ENCODE measurements at regions of chr11 and their contacts with region 1.

Region 1: GRCh38 chr11:120511116-120511819 is at the start of gene GRIK4:
- DNase-seq: peak; percentile 75 to 92 (median 89)
- H3K4me3 ChIP-seq: peak within 1 kb of the TSS; percentile 31 to 77 (median 60)
- H3K27ac ChIP-seq: peak within 1 kb of the TSS in 42 of 59 donors; percentile 0 to 84 (median 70)
- H3K27me3 ChIP-seq: peaks cover 0 to 13% (median 0%) of the 10 kb centered on the region in 45 donors
- CTCF ChIP-seq: peak; percentile 77 to 99 (median 96)
- total RNA-seq, gene GRIK4: 7.8 to 24.1 (median 14.8) TPM

Region 2: GRCh38 chr11:120547811-120548681 is 36.8 kb after region 1 on chr11:
- intact Hi-C with region 1: loop called in 1 of 2 experiments (anchors 5 kb)
- DNase-seq: peak; percentile 37 to 97 (median 94)
- H3K4me3 ChIP-seq: peak overlapping the region in 4 of 59 donors; percentile 12 to 30 (median 17)
- H3K27ac ChIP-seq: peak overlapping the region; percentile 21 to 94 (median 80)
- H3K27me3 ChIP-seq: no peaks in the 10 kb centered on the region
- CTCF ChIP-seq: peak in 19 of 56 donors; percentile 2 to 31 (median 14)

Region 3: DNA sequence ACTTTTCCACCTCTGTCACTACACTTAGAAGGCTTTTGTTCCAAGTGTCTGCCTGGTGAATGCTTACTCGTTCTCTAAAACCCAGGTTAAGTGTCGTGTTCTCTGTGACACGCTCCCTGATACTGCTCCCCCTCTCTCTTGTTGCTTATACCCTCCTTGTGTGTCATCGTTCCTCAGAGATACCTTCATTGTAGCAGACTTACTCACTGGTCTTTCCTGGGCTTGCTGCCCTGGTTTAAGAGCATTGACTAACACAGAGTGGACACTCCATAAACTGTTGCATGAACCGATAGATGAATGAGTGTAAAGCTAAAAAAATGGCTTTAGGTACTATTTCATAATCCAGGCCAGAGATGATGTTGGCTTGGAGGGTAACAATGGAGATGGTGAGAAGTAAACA is 171.6 kb after region 1 on chr11:
- intact Hi-C with region 1: loop called (anchors 1 to 2 kb)
- DNase-seq: no peak
- H3K4me3 ChIP-seq: no peak overlapping the region
- H3K27ac ChIP-seq: no peak overlapping the region
- H3K27me3 ChIP-seq: no peaks in the 10 kb centered on the region
- CTCF ChIP-seq: no peak

Region 4: GRCh38 chr11:120817158-120817557 is 305.9 kb after region 1 on chr11:
- intact Hi-C with region 1: loop called in 1 of 2 experiments (anchors 5 kb)
- DNase-seq: peak in 1 of 10 donors; percentile 45
- H3K4me3 ChIP-seq: no peak overlapping the region
- H3K27ac ChIP-seq: no peak overlapping the region
- H3K27me3 ChIP-seq: no peaks in the 10 kb centered on the region
- CTCF ChIP-seq: no peak

Region 5: GRCh38 chr11:120952461-120953434 is 441.5 kb after region 1 on chr11:
- intact Hi-C with region 1: loop called (anchors 1 to 2 kb)
- DNase-seq: peak; percentile 40 to 85 (median 78)
- H3K4me3 ChIP-seq: peak overlapping the region in 37 of 59 donors; percentile 1 to 53 (median 33)
- H3K27ac ChIP-seq: peak overlapping the region in 7 of 59 donors; percentile 11 to 63 (median 31)
- H3K27me3 ChIP-seq: no peaks in the 10 kb centered on the region
- CTCF ChIP-seq: peak in 55 of 56 donors; percentile 43 to 87 (median 75)

Region 6: DNA sequence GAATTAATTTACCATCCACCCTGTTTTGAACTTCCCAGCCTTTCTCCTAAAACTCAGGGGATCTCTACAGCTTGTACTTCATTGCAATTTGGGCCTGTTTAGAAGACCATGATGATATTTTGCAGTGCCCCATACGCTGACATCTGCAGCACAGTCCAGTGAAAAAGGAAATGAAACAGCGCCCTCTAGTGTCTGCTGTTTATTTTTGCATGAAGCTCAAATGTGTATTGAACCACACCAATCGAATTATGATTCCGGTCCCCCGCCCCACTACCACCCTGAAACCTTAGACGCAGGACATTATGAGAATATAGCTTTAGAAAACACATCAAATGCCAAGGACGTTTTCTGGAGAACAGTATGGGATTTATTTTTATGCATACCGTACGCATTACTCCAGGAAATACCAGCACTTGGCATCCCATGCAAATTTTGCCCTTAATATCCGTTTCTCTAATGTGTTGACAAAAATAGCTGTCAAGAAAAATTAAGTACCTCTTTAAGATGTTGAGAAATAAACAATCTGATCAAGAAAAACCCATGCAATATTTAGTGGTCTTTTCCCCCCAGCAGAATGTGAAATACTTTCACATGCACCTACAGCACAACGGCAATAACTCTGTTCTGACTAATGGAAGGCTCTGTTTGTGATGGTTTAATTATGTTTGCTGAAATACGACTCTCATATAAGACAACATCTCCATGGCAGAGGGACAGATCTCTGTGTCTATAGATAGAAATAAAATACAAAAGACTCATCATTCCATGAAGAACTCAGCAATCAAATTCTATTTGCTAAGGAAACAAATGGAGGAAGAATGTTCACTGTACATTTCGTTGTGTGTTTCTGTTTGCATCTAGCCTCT is 683.7 kb after region 1 on chr11:
- intact Hi-C with region 1: loop called in 1 of 2 experiments (anchors 2 kb)
- DNase-seq: peak in 3 of 10 donors; percentile 30 to 58 (median 52)
- H3K4me3 ChIP-seq: peak overlapping the region in 41 of 59 donors; percentile 4 to 57 (median 34)
- H3K27ac ChIP-seq: no peak overlapping the region
- H3K27me3 ChIP-seq: peaks cover 0 to 16% (median 0%) of the 10 kb centered on the region in 45 donors
- CTCF ChIP-seq: peak; percentile 78 to 98 (median 90)

Measured in dorsolateral prefrontal cortex (tissue), 120 donors.